ENCODE measurements at regions of chr7 and their contacts with region 1.

Region 1: DNA sequence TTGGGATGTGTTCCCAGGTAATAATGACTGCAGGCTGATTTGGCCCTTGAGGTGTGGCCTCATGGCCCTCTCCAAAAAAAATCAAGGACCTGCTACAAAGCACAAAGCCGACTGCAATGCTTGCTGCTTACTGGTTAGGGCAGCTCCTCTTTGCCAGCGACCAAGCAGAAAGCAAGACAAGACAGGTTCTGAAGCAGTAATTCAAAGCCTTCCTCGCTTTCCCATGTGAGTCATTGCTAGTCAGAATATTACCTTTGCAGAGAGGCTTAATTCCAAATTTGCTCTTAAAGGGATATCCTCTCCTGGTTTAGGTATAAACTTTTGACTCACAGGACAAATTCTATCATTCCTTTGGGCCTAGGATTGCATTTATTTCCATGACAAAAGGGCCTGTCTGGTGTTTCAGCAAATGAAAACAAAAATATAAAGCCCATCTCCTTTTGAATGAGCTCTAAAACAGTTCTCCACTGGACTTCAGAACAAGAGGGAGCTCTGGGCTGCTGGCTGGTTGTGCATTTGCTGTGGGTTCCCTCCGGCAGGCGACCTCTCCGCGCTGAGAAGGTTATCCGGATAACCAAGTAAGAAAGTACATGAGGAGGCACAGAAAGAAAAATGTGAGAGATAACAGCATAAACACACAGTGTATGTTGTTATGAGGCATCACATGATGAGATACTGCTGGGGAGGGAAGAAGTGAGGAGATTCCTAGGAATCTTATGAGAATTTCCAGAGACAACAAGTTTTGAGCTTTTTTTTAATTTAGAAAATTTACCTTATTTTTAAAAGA is 90.8 kb downstream of the EGFR start:
- DNase-seq: peak; percentile 91
- ATAC-seq: peak; percentile 87
- H3K4me3 ChIP-seq: peak overlapping the region; percentile 28; the same call in 1 of the 2 replicates
- H3K27ac ChIP-seq: peak overlapping the region; percentile 91
- H3K4me1 ChIP-seq: peaks cover 42% of the 10 kb centered on the region
- H3K27me3 ChIP-seq: no peaks in the 10 kb centered on the region
- CTCF ChIP-seq: no peak

Region 2: DNA sequence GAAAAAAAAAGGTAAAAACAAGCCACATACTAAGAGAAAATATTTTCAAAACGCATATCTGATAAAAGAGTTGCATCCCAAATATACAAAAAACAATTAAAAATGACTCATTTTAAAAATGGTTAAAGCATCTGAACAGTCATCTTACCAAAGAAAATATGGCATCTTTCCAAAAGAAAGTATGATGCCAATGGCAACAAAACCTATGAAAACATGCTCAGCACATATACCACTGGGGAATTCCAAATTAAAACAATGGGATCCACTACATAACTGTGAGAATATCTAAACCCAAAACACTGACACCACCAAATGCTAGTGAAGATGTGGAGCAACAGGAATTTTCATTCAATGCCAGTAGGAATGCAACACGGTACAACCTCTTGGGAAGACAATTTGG is 528.1 kb before region 1 on chr7:
- CTCF ChIA-PET with region 1: no interaction called
- POLR2A ChIA-PET with region 1: no interaction called
- intact Hi-C with region 1: no loop called
- DNase-seq: peak; percentile 30
- ATAC-seq: no peak
- H3K4me3 ChIP-seq: no peak overlapping the region
- H3K27ac ChIP-seq: no peak overlapping the region
- H3K4me1 ChIP-seq: no peaks in the 10 kb centered on the region
- H3K27me3 ChIP-seq: peaks cover 8% of the 10 kb centered on the region; the same call in 1 of the 2 replicates
- CTCF ChIP-seq: no peak

Region 3: DNA sequence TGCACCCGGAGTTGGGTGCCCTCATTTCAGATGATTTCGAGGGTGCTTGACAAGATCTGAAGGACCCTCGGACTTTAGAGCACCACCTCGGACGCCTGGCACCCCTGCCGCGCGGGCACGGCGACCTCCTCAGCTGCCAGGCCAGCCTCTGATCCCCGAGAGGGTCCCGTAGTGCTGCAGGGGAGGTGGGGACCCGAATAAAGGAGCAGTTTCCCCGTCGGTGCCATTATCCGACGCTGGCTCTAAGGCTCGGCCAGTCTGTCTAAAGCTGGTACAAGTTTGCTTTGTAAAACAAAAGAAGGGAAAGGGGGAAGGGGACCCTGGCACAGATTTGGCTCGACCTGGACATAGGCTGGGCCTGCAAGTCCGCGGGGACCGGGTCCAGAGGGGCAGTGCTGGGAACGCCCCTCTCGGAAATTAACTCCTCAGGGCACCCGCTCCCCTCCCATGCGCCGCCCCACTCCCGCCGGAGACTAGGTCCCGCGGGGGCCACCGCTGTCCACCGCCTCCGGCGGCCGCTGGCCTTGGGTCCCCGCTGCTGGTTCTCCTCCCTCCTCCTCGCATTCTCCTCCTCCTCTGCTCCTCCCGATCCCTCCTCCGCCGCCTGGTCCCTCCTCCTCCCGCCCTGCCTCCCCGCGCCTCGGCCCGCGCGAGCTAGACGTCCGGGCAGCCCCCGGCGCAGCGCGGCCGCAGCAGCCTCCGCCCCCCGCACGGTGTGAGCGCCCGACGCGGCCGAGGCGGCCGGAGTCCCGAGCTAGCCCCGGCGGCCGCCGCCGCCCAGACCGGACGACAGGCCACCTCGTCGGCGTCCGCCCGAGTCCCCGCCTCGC is 91.0 kb before region 1 on chr7 and contains the start of gene EGFR:
- CTCF ChIA-PET with region 1: no interaction called
- POLR2A ChIA-PET with region 1: no interaction called
- intact Hi-C with region 1: no loop called
- DNase-seq: peak; percentile 76
- ATAC-seq: peak; percentile 80
- H3K4me3 ChIP-seq: peak within 1 kb of the TSS; percentile 90
- H3K27ac ChIP-seq: peak within 1 kb of the TSS; percentile 69
- H3K4me1 ChIP-seq: peaks cover 27% of the 10 kb centered on the region
- H3K27me3 ChIP-seq: no peaks in the 10 kb centered on the region
- CTCF ChIP-seq: no peak
- total RNA-seq, gene EGFR: 50.0 and 64.6 TPM in 2 replicates

Region 4: GRCh38 chr7:55127622-55128081 is 18.1 kb after region 1 on chr7:
- CTCF ChIA-PET with region 1: no interaction called
- POLR2A ChIA-PET with region 1: no interaction called
- intact Hi-C with region 1: loop called (anchors 1 kb)
- DNase-seq: peak; percentile 77
- ATAC-seq: peak; percentile 27
- H3K4me3 ChIP-seq: peak overlapping the region; percentile 10; the same call in 1 of the 2 replicates
- H3K27ac ChIP-seq: peak overlapping the region; percentile 99
- H3K4me1 ChIP-seq: peaks cover 76% of the 10 kb centered on the region
- H3K27me3 ChIP-seq: no peaks in the 10 kb centered on the region
- CTCF ChIP-seq: no peak